ENCODE measurements at regions of chr10 and their contacts with region 1.

Region 1: DNA sequence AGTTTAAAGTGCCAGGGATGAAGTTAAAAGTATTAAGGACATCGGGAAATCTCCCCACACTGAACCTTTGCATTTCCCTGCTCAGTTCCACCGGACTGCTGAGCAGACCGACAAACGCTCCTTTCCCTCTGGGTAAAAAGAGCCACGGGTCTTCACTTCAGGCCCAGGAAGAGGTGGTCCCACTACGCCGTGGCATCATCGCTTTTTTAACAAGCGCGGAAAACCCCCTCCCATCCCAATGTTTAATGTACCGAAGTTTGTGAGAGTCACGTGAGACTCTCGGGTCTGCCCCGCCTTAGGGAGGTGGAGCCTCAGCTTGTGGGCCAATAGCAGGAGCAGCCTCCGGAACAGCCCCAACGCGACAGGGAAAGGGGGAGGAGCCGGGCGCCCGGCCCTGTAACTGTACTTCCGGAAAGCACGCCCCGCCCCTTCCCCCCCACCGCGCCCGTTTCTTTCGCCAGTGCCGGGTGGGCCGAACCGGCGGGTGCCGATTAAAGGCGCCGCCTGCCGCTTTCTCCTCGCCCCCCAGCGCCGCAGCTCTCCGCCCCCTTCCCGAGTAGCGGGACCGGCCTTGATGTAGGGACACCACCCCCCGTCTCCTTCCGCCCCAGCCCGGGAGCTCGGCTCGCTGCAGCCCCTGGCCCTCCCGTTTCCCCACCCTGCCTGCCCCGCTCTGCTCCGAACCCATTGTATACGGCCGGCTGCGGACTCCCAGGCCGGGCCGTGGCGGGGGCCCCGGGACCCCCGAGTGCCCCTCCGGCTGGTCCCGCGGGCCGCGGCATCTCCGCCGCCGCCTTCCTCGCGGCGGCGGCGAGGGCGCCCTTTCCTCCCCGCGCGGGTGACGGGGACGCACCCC is 2.2 kb upstream of the TRIM8 start:
- DNase-seq: peak; percentile 99
- ATAC-seq: peak; percentile 74 to 88 (median 81)
- H3K4me3 ChIP-seq: peak overlapping the region; percentile 68 to 97 (median 86)
- H3K27ac ChIP-seq: peak overlapping the region; percentile 93 to 100 (median 98)
- H3K4me1 ChIP-seq: peaks cover 3 to 22% (median 10%) of the 10 kb centered on the region in 12 donors
- H3K27me3 ChIP-seq: no peaks in the 10 kb centered on the region
- CTCF ChIP-seq: no peak
- POLR2A ChIP-seq: peak; percentile 72 to 89

Region 2: GRCh38 chr10:102503281-102504220 is 138.6 kb before region 1 on chr10 and contains the start of gene SUFU:
- intact Hi-C with region 1: loop called in 6 of 10 experiments (anchors 1 to 10 kb)
- DNase-seq: peak; percentile 98 to 99 (median 98)
- ATAC-seq: peak; percentile 77 to 90 (median 82)
- H3K4me3 ChIP-seq: peak within 1 kb of the TSS; percentile 70 to 97 (median 84)
- H3K27ac ChIP-seq: peak within 1 kb of the TSS; percentile 51 to 98 (median 88)
- H3K4me1 ChIP-seq: peaks cover 0 to 70% (median 43%) of the 10 kb centered on the region in 12 donors
- H3K27me3 ChIP-seq: no peaks in the 10 kb centered on the region
- CTCF ChIP-seq: peak; percentile 85 to 98 (median 95)
- POLR2A ChIP-seq: peak in 1 of 2 donors; percentile 85
- total RNA-seq, gene SUFU: 5.8 to 12.7 (median 7.7) TPM

Region 3: DNA sequence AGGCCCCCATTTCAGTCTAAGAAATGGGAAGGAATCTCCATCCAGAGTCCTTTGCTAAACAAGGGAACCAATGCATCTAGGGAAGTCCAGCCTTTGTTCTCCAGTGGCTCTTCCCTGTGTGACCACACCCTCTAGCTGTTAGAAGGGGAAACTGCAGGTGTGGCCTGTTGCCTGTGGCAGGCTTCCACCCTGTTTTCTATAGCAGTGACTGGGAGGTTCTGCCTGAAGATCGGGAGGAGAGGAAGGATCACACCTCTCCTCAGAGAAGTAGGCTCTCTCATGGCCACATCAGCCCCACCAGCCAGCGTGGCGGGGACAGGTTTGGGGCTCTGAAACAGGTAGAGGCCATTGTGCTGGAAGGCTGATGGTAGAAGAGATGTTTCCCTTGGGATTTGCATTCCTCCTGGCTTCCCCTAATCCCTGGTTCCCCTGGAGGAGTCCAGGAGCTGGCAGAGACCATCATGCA is 45.6 kb before region 1 on chr10:
- intact Hi-C with region 1: loop called in 4 of 10 experiments (anchors 2 to 5 kb)
- DNase-seq: peak in 2 of 5 donors; percentile 48 to 54
- ATAC-seq: peak; percentile 48 to 72 (median 60)
- H3K4me3 ChIP-seq: peak overlapping the region in 1 of 12 donors; percentile 21
- H3K27ac ChIP-seq: peak overlapping the region; percentile 38 to 90 (median 76)
- H3K4me1 ChIP-seq: peaks cover 16 to 64% (median 54%) of the 10 kb centered on the region in 12 donors
- H3K27me3 ChIP-seq: no peaks in the 10 kb centered on the region
- CTCF ChIP-seq: peak; percentile 62 to 86 (median 78)
- POLR2A ChIP-seq: no peak

Region 4: GRCh38 chr10:102656791-102657552 is 14.9 kb after region 1 on chr10:
- intact Hi-C with region 1: loop called in 1 of 10 experiments (anchors 1 kb)
- DNase-seq: peak in 1 of 5 donors; percentile 64
- ATAC-seq: no peak
- H3K4me3 ChIP-seq: no peak overlapping the region
- H3K27ac ChIP-seq: peak overlapping the region in 11 of 12 donors; percentile 29 to 75 (median 53)
- H3K4me1 ChIP-seq: peaks cover 4 to 78% (median 50%) of the 10 kb centered on the region in 12 donors
- H3K27me3 ChIP-seq: no peaks in the 10 kb centered on the region
- CTCF ChIP-seq: no peak
- POLR2A ChIP-seq: no peak

Region 5: DNA sequence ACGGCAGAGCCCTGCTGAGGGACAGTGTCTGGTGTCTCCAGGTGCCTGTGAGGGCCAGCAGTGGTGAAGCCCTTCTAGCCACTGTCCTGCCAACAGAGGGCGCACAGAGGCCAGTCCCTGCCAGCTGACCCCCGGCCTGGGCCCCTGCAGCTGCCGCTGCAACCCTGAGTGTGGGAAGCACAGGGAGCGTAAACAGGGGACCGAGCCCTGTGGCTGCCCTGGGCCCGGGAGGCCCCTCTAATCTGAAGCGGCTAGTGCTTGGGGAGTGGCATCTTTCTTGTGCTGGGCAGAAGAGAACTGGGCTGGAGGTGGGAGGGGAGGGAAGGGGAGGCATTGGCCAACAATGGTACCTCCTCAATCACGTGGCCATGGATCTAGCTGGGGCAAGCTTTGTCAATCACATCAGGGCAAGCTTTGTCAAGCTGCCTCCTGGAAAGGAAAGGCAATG is 36.8 kb after region 1 on chr10:
- intact Hi-C with region 1: loop called in 2 of 10 experiments (anchors 2 kb)
- DNase-seq: peak; percentile 70 to 85 (median 77)
- ATAC-seq: peak; percentile 54 to 71 (median 71)
- H3K4me3 ChIP-seq: peak overlapping the region in 3 of 12 donors; percentile 18 to 24 (median 21)
- H3K27ac ChIP-seq: peak overlapping the region in 10 of 12 donors; percentile 0 to 71 (median 54)
- H3K4me1 ChIP-seq: peaks cover 9 to 58% (median 51%) of the 10 kb centered on the region in 12 donors
- H3K27me3 ChIP-seq: no peaks in the 10 kb centered on the region
- CTCF ChIP-seq: peak; percentile 42 to 76 (median 70)
- POLR2A ChIP-seq: no peak

Region 6: GRCh38 chr10:102713814-102714620 is 71.9 kb after region 1 on chr10 and contains the start of gene ARL3:
- intact Hi-C with region 1: loop called in 6 of 10 experiments (anchors 2 to 10 kb)
- DNase-seq: peak; percentile 97 to 99 (median 99)
- ATAC-seq: peak; percentile 98 to 99 (median 98)
- H3K4me3 ChIP-seq: peak within 1 kb of the TSS; percentile 70 to 100 (median 90)
- H3K27ac ChIP-seq: peak within 1 kb of the TSS; percentile 2 to 92 (median 83)
- H3K4me1 ChIP-seq: peaks cover 0 to 46% (median 22%) of the 10 kb centered on the region in 12 donors
- H3K27me3 ChIP-seq: no peaks in the 10 kb centered on the region
- CTCF ChIP-seq: peak in 7 of 12 donors; percentile 1 to 46 (median 38)
- POLR2A ChIP-seq: peak in 1 of 2 donors; percentile 74
- total RNA-seq, gene ARL3: 5.8 to 17.0 (median 12.6) TPM

Region 7: DNA sequence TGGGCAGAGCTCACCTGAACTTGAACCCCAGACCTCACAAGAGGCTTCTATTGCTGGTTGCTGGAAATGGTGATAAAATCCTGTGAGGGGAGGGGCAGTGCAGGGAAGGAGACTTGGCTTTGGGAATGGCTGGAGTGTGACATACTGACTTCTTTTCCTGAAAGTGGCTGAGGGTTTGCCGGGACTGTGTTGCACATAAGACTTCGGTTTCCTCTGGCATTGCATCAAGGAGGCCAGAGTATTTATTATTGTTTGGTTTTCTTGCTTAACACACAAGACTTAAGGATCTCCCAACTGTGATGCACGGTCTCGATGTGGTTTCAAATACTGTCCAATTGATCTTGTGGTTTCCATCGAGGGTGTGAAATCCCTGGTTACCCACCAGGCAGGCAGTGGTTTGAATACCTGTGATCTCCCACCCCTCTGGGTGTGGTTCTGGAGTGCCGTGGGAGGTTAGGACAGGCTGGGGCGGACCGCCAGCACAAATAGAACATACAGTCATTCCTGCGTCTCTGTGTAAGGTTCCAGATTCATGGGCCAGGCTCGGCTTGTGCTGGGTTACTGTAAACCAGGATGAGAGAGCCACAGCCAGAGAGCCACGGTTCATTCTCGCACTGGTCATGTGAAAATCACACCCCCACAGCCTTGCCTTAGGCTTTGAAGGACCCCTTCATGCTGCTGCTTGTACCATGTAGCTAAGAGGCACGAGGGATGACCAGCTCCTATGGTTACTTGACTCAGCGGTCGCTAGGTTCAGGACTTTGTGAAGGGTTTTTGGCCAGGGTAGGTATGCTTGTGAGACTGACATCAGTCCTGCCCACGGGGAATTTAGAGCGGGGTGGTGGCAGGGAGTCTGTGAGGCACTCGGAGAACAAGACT is 140.8 kb after region 1 on chr10:
- intact Hi-C with region 1: loop called in 1 of 10 experiments (anchors 10 kb)
- DNase-seq: peak in 4 of 5 donors; percentile 63 to 87 (median 70)
- ATAC-seq: peak; percentile 79 to 81 (median 80)
- H3K4me3 ChIP-seq: peak overlapping the region in 10 of 12 donors; percentile 1 to 33 (median 15)
- H3K27ac ChIP-seq: peak overlapping the region; percentile 77 to 99 (median 94)
- H3K4me1 ChIP-seq: peaks cover 32 to 97% (median 89%) of the 10 kb centered on the region in 12 donors
- H3K27me3 ChIP-seq: no peaks in the 10 kb centered on the region
- CTCF ChIP-seq: no peak
- POLR2A ChIP-seq: peak in 1 of 2 donors; percentile 24